IMR-90 (cell line): ENCODE measurements at regions of chr2 and their contacts with region 1.

Region 1: DNA sequence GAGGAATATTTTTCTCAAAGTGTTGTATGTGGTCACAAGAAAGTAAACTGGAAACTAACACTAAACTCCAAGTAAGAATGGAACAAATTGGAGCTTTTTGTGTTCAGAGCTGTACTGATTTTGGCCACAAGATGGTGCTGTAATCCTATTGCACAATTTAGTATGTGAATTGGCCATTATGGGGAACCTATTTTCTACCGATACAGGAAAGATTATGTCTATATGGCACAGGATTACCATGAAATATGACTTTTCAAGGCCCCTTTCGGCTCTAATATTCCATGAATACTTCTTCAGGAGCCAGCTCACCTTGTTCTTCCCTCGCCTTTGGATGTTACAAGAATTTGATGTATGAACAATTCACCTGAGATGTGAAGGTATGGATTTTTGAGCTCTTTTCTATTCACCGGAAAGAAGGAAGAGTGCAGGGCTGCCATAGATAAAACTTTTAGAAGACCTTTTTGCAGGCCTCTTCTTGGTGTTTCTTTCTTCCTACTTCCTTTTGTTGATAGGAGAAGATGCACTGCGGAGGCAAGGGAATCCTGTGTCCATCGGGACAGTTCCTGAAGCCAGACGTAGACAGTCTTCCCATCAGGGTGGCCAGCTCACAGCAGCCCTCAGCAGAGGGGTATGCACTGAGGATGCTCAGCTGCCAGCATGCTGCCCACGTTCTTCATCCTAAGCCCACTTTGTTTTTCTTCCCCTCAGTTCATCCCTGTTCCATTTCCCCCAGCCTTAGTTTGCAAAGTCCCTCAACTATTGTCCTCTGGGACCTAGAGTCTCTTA is 13.3 kb downstream of the MRPL44 start:
- DNase-seq: peak; percentile 67
- ATAC-seq: peak; percentile 80
- H3K4me3 ChIP-seq: no peak overlapping the region
- H3K27ac ChIP-seq: no peak overlapping the region
- H3K4me1 ChIP-seq: no peaks in the 10 kb centered on the region
- H3K27me3 ChIP-seq: no peaks in the 10 kb centered on the region
- CTCF ChIP-seq: peak; percentile 95
- POLR2A ChIP-seq: no peak
- RAD21 ChIP-seq: peak; percentile 92

Region 2: GRCh38 chr2:223674998-223675609 is 295.4 kb before region 1 on chr2:
- CTCF ChIA-PET with region 1: no interaction called
- POLR2A ChIA-PET with region 1: no interaction called
- dilution Hi-C with region 1: no loop called
- in situ Hi-C with region 1: no loop called
- intact Hi-C with region 1: no loop called
- DNase-seq: peak; percentile 54
- ATAC-seq: peak; percentile 80
- H3K4me3 ChIP-seq: no peak overlapping the region
- H3K27ac ChIP-seq: no peak overlapping the region
- H3K4me1 ChIP-seq: no peaks in the 10 kb centered on the region
- H3K27me3 ChIP-seq: no peaks in the 10 kb centered on the region
- CTCF ChIP-seq: peak; percentile 71
- POLR2A ChIP-seq: no peak
- RAD21 ChIP-seq: peak; percentile 63

Region 3: DNA sequence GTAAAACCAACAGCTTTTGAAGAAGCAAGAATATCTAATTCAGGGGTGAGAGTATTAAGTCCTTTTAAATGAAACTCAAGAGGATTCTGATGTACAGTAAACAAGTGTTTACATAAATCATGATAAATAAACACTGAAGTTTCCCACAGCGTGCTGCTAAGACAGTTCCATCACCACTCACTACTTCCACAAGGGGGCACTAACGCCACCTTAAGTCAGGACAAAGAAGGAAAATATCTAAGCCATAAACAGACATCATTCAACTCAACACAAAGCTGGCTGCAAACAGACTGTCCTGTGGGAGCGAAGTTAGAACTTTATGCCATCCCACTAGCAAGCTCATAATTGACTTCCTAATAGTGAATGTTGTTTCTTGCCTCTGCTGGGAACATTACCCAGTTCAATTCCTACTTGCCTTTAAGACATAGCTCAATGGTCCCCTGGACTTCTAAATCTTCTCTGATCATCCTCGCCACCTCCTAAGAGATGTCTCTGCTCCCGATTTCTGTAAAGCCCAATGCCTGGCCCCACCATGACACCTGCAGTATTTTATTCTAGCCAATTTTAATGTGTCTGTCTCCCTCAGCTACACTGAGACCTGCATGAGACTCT is 23.2 kb after region 1 on chr2:
- CTCF ChIA-PET with region 1: interaction called, 5 read pairs
- POLR2A ChIA-PET with region 1: no interaction called
- dilution Hi-C with region 1: no loop called
- in situ Hi-C with region 1: no loop called
- intact Hi-C with region 1: loop called (anchors 1 kb)
- DNase-seq: peak; percentile 82
- ATAC-seq: peak; percentile 77
- H3K4me3 ChIP-seq: no peak overlapping the region
- H3K27ac ChIP-seq: no peak overlapping the region
- H3K4me1 ChIP-seq: peaks cover 12% of the 10 kb centered on the region
- H3K27me3 ChIP-seq: no peaks in the 10 kb centered on the region
- CTCF ChIP-seq: peak; percentile 87
- POLR2A ChIP-seq: no peak
- RAD21 ChIP-seq: peak; percentile 90

Region 4: GRCh38 chr2:224284134-224284946 is 313.8 kb after region 1 on chr2:
- CTCF ChIA-PET with region 1: interaction called, 33 read pairs
- POLR2A ChIA-PET with region 1: interaction called, 3 read pairs
- dilution Hi-C with region 1: no loop called
- in situ Hi-C with region 1: no loop called
- intact Hi-C with region 1: loop called (anchors 1 kb)
- DNase-seq: peak; percentile 25
- ATAC-seq: peak; percentile 46; the same call in 1 of the 2 replicates
- H3K4me3 ChIP-seq: no peak overlapping the region
- H3K27ac ChIP-seq: no peak overlapping the region
- H3K4me1 ChIP-seq: no peaks in the 10 kb centered on the region
- H3K27me3 ChIP-seq: peaks cover 14% of the 10 kb centered on the region
- CTCF ChIP-seq: peak; percentile 67
- POLR2A ChIP-seq: no peak
- RAD21 ChIP-seq: peak; percentile 82

Region 5: DNA sequence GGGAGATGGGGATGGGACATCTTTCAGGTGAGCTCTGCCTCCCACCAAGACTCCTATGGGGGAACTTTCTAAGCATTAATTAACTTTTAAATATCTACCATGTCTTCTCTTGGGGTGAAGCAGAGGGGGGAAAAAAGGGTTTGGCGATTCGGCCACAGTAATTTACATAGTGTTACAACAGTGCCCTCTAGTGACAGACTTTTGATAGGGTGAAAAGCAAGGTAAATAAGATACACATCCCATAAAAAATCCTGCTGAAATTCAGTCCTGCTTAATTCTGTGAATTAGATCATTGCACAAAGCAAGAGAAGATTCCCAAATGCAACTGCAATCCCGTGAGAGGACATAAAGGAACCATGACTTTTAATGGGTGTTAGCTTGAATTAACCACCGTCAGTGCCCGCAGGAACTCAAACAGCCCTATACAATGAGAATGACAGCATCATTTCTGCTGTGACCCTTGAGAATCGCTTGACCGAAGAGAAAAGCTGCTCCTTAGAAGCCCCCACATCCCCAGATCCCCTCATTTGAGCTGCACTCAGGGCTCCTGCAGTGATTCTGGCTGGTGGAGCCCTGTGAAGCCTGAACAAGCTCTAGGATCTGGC is 398.6 kb after region 1 on chr2:
- CTCF ChIA-PET with region 1: interaction called, 4 read pairs
- POLR2A ChIA-PET with region 1: no interaction called
- dilution Hi-C with region 1: no loop called
- in situ Hi-C with region 1: no loop called
- intact Hi-C with region 1: loop called (anchors 5 kb)
- DNase-seq: peak; percentile 49
- ATAC-seq: peak; percentile 74
- H3K4me3 ChIP-seq: no peak overlapping the region
- H3K27ac ChIP-seq: no peak overlapping the region
- H3K4me1 ChIP-seq: no peaks in the 10 kb centered on the region
- H3K27me3 ChIP-seq: peaks cover 9% of the 10 kb centered on the region
- CTCF ChIP-seq: peak; percentile 70
- POLR2A ChIP-seq: no peak
- RAD21 ChIP-seq: peak; percentile 56

Region 6: GRCh38 chr2:225108805-225109204 is 1138.3 kb after region 1 on chr2:
- CTCF ChIA-PET with region 1: no interaction called
- POLR2A ChIA-PET with region 1: interaction called, 20 read pairs
- dilution Hi-C with region 1: no loop called
- in situ Hi-C with region 1: no loop called
- intact Hi-C with region 1: no loop called
- DNase-seq: no peak
- ATAC-seq: no peak
- H3K4me3 ChIP-seq: no peak overlapping the region
- H3K27ac ChIP-seq: no peak overlapping the region
- H3K4me1 ChIP-seq: peaks cover 3% of the 10 kb centered on the region; the same call in 1 of the 2 replicates
- H3K27me3 ChIP-seq: no peaks in the 10 kb centered on the region
- CTCF ChIP-seq: no peak
- POLR2A ChIP-seq: no peak
- RAD21 ChIP-seq: no peak